ENCODE measurements at regions of chr1 and their contacts with region 1.

Region 1: GRCh38 chr1:170967042-170967910 is 31.9 kb downstream of the MROH9 start:
- DNase-seq: peak; percentile 77
- ATAC-seq: peak; percentile 88
- H3K4me3 ChIP-seq: no peak overlapping the region
- H3K27ac ChIP-seq: no peak overlapping the region
- H3K4me1 ChIP-seq: no peaks in the 10 kb centered on the region
- H3K27me3 ChIP-seq: peaks cover 38% of the 10 kb centered on the region
- CTCF ChIP-seq: peak; percentile 92

Region 2: DNA sequence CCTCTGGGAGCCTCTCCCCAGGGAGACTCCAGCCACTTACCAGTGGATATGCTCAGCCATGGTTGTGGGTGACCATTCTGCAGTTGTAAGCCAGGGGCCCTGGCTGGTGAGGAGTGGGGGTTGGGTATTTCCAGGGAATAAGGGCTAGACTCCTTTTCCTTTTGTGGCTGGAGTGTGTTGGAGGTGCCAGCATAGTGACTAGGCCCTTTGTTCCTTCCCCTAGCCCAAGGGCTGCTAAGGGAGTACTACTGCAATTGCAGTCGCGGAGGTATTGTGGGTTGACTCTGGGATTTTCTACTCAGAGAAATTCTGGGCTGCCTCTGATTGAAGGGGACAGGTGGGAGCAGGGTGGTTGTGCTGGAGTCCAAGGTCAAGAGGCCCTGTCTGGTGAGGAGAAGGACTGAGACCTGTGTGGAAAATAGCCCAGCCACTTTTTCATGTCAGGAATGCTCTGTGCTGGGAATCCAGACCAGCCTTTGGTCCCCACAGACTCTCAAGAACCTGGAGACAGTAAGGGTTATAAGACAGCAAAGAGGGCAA is 11.2 kb after region 1 on chr1:
- CTCF ChIA-PET with region 1: no interaction called
- POLR2A ChIA-PET with region 1: no interaction called
- intact Hi-C with region 1: no loop called
- DNase-seq: no peak
- ATAC-seq: no peak
- H3K4me3 ChIP-seq: no peak overlapping the region
- H3K27ac ChIP-seq: no peak overlapping the region
- H3K4me1 ChIP-seq: no peaks in the 10 kb centered on the region
- H3K27me3 ChIP-seq: peaks cover 33% of the 10 kb centered on the region
- CTCF ChIP-seq: no peak

Region 3: DNA sequence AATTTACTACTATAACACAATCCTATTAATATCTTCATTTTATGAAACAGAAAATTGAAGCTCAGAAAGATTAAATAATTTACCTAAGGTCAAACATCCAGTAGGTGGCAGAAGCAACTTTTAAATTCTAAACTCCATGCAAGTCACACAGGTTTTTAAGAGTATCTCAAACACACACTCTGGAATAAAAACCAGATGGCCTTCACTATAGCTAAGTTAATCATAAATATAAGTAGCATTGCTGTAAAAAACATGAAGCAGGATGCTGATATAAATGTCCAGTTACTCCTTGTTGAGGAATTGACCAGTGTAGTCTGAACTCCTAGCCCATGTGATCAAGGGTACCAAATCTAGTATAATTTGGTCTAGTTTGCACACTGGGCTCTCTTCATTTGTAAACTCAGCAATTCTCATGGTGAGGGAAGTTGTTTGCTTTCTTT is 114.1 kb after region 1 on chr1:
- CTCF ChIA-PET with region 1: interaction called, 11 read pairs
- POLR2A ChIA-PET with region 1: no interaction called
- intact Hi-C with region 1: no loop called
- DNase-seq: peak; percentile 62
- ATAC-seq: peak; percentile 61
- H3K4me3 ChIP-seq: no peak overlapping the region
- H3K27ac ChIP-seq: no peak overlapping the region
- H3K4me1 ChIP-seq: no peaks in the 10 kb centered on the region
- H3K27me3 ChIP-seq: peaks cover 31% of the 10 kb centered on the region
- CTCF ChIP-seq: peak; percentile 79

Region 4: DNA sequence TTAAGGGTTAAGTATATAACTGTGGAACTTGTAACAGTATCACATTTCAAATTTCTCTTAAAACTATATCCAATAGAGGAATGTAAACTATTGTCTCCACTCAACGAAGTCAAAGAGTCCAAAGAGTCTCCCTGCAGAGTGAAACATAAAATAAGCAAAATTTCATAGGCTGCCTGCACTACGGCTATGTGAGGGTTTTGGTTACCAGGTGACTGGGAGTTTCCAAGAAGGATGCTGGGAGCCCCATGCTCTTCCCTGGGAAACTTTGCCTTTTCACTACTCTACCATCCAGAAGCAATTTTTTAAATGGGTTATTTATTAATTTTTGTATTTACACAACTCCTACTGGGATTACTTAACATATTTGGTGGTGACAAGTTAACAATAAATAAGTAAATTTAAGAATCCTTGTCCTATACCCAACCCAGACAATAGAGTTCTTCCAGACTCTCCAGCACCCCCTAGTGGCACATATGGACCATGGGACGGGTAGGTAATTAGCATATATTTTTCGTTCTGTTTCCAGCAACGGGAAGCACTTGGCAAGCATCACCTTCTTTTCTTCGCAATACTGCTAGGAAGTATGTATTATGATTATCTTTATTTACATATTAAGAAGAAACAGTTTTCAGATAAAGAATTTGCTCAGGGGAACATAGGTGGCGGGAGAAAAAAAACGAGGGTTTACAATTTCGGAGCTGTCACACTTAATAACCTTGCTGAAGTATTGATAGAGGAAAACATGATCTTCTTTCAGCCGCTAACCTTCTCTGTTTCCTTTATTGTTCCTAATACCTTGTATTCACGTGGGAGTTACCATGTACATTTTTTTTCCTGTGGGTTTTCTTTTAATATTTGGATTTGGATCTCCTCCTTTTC is 221.4 kb after region 1 on chr1:
- CTCF ChIA-PET with region 1: interaction called, 3 read pairs
- POLR2A ChIA-PET with region 1: no interaction called
- intact Hi-C with region 1: loop called (anchors 1 kb)
- DNase-seq: peak; percentile 85
- ATAC-seq: peak; percentile 98
- H3K4me3 ChIP-seq: no peak overlapping the region
- H3K27ac ChIP-seq: no peak overlapping the region
- H3K4me1 ChIP-seq: no peaks in the 10 kb centered on the region
- H3K27me3 ChIP-seq: peaks cover 67% of the 10 kb centered on the region
- CTCF ChIP-seq: peak; percentile 99

Region 5: GRCh38 chr1:171226747-171227370 is 259.6 kb after region 1 on chr1:
- CTCF ChIA-PET with region 1: interaction called, 27 read pairs
- POLR2A ChIA-PET with region 1: no interaction called
- intact Hi-C with region 1: loop called (anchors 1 kb)
- DNase-seq: peak; percentile 83
- ATAC-seq: peak; percentile 91
- H3K4me3 ChIP-seq: no peak overlapping the region
- H3K27ac ChIP-seq: no peak overlapping the region
- H3K4me1 ChIP-seq: no peaks in the 10 kb centered on the region
- H3K27me3 ChIP-seq: peaks cover 20% of the 10 kb centered on the region
- CTCF ChIP-seq: peak; percentile 96